ENCODE measurements at regions of chr1 and their contacts with region 1.

Region 1: DNA sequence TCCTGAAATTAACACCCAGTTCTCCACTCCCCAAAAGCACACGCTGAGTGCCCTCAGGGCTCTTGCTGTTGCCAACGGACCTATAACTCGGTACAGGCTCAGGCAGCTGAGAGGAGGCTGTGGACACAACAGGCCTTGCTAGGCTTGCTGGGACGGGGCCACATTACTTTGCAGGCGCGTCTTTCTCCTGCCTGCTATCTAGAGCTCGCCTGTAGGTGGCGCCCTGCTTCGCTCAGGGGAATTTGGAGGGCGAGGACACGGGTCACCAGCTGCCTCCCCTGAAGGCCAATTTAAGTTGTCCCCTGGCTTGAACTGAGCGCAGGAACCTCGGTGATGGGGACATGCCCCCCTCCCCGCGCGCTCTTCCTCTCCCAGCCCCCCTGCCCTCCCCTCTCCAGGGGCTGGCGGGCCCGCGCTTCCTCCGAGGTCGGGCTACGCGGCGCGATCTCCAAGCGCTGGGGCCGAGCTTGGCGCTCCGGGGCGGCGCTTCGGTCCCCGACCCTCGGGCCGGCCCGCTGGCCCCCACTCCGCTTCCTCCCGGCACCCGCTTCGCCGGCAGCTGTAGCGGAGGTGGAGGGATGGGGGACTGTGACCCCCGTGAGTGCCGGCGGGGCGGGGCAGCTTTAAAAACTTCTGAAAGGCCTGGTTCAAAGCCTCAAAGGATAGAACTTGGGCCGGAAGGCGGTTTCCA is 32.4 kb upstream of the NFIA start:
- DNase-seq: peak; percentile 70
- ATAC-seq: peak; percentile 80
- H3K4me3 ChIP-seq: peak overlapping the region; percentile 67 to 80 (median 74)
- H3K27ac ChIP-seq: peak overlapping the region; percentile 47
- H3K4me1 ChIP-seq: peaks cover 27% of the 10 kb centered on the region
- H3K27me3 ChIP-seq: peaks cover 2 to 32% of the 10 kb centered on the region in 2 experiments; a peak in 4 of 5 replicates
- CTCF ChIP-seq: peak; percentile 97
- EP300 ChIP-seq: no peak
- POLR2A ChIP-seq: no peak
- RAD21 ChIP-seq: peak; percentile 84

Region 2: DNA sequence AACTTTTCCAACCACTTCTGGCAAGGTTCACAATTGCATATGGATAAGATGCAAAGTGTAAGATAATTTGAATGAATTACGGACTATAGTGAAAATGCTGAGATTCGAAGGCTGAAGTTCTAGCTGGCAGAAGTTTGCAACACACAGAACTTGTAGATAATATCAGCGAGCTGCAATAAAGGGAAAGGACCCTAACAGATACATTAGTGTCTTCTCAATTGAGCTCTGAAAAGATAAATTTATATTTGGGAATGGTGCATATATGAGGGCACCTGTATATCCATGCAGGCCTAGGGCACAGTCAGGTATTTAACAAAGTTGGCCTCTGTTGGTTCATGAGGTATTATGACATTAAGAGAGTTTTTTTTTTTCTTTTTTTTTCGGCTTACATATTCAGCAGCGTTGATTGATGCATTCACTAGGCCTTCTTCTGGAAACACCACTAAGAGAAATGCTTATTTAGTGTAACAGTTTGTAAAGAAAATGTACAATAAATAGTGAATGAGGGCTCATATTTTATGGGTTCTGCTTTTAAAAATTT is 34.6 kb after region 1 on chr1:
- CTCF ChIA-PET with region 1: no interaction called
- POLR2A ChIA-PET with region 1: interaction called, 11 read pairs
- in situ Hi-C with region 1: no loop called
- intact Hi-C with region 1: loop called (anchors 5 kb)
- DNase-seq: no peak
- ATAC-seq: no peak
- H3K4me3 ChIP-seq: peak overlapping the region; percentile 83 to 96 (median 86); a peak in 5 of 6 replicates
- H3K27ac ChIP-seq: peak overlapping the region; percentile 95
- H3K4me1 ChIP-seq: peaks cover 64% of the 10 kb centered on the region
- H3K27me3 ChIP-seq: no peaks in the 10 kb centered on the region; a peak in 1 of 5 replicates
- CTCF ChIP-seq: no peak
- EP300 ChIP-seq: no peak
- POLR2A ChIP-seq: no peak
- RAD21 ChIP-seq: no peak

Region 3: DNA sequence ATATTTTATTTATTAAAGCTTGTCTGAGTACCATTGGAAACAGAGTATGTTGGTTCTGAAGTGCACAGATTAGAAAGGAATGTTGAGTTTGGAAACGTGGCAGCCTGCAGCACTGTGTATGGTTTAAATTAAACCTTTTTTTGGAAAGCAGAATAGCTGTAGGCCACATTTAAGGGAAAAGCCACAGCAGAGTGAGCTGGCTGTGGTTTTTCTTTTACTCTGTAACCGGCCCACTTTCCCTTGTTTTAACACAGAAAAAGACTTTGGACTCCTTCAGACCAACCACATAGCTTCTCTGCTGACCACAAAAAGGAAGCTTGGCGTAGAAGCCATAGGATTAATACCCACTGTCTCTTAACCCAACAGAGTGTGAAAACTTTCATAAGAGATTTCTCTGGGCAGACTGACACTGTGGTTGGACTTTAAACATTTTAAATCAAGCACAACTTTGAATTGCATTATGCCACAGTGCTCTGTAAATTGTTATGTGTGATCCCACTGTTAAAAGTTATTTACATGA is 107.5 kb after region 1 on chr1:
- CTCF ChIA-PET with region 1: no interaction called
- POLR2A ChIA-PET with region 1: no interaction called
- in situ Hi-C with region 1: no loop called
- intact Hi-C with region 1: loop called (anchors 10 kb)
- DNase-seq: peak; percentile 85
- ATAC-seq: peak; percentile 93
- H3K4me3 ChIP-seq: peak overlapping the region in 1 of 3 experiments; percentile 31; a peak in 2 of 6 replicates
- H3K27ac ChIP-seq: peak overlapping the region; percentile 65
- H3K4me1 ChIP-seq: peaks cover 58% of the 10 kb centered on the region
- H3K27me3 ChIP-seq: no peaks in the 10 kb centered on the region
- CTCF ChIP-seq: no peak
- EP300 ChIP-seq: 0 out of 4 replicates have a peak, but pooled peaks of 1 of the 2 experiments have one; percentile 39
- POLR2A ChIP-seq: no peak
- RAD21 ChIP-seq: no peak

Region 4: DNA sequence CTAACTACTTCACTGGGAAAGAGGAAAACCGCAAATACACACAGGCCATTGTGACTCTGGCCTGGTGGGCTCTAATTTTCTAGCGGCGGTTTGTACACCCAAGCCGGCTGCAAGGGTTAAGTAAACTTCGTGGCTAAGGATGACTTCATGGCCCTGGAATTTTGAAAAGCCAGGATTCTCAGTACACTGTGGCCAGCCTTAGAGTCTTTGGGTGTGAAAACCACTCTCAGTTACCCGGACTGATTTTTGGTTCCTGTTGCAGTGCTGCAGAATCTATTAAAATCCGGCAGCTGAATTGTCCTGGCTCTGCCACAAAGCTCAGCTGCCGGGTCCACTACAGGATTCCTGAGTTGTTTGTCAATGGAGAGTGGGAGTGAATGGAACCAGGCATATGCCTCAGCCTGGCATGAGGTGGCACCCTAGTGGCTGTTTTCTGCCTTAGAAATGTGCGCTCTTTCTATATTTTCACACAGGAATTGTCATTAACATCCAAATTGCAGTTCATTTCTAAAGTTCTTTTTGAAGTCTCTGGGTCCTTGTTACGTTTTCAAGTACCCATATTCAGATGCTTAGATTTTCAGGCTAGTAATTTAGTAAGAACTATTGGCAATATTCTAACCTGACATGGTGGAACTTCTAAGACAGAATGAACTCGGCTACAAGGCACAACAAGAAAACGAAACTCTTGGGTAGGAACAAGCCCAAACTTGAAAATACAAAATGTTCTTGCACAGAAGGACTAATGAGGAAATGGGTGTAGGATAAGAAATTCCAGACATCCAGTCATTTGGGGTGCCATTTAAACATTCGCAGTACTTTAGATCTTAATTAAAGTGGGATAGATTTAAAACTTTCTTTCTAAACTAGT is 288.2 kb after region 1 on chr1:
- CTCF ChIA-PET with region 1: interaction called, 5 read pairs
- POLR2A ChIA-PET with region 1: no interaction called
- in situ Hi-C with region 1: loop called (anchors 5 kb)
- intact Hi-C with region 1: loop called (anchors 2 kb)
- DNase-seq: peak; percentile 91
- ATAC-seq: peak; percentile 95
- H3K4me3 ChIP-seq: peak overlapping the region; percentile 7 to 39 (median 37); a peak in 2 of 6 replicates
- H3K27ac ChIP-seq: peak overlapping the region; percentile 78
- H3K4me1 ChIP-seq: peaks cover 47% of the 10 kb centered on the region
- H3K27me3 ChIP-seq: no peaks in the 10 kb centered on the region
- CTCF ChIP-seq: peak; percentile 69
- EP300 ChIP-seq: peak; percentile 36 to 65; a peak in 2 of 4 replicates
- POLR2A ChIP-seq: no peak
- RAD21 ChIP-seq: peak; percentile 67; the same call in 1 of the 2 replicates

Region 5: DNA sequence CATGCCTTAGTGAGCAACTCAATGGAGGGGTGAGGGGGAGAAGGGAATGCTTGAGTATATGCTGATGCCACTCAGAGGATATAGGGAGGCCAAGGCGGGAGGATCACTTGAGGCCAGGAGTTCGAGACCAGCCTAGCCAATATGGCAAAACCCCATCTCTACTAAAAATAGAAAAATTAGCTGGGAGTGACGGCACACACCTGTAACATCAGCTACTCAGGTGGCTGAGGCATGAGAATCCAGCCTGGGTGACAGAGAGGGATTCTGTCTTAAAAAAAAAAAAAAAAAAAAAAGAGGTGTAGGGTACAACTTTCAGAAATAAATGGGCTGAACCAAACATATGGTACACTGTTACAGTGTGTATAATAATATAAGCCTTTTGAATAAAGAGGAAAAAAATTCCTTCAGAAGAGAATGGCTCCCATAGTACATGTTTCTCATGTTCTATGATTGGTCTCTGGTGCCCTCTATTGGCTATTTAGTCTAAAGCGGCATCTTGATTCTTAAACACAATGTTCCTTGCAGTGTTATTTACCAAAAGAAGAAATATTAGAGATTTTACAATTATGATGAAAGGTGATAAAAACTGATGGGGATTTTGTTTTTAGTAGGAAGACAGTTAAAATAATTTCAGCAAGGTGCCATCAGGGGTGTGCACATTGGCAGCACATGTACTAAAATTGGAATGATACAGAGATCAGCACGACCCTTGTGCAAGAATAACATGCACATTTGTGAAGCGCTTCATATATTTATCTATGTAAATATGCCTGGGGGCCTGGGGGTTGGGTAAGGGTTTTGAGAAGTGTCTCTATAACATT is 802.1 kb after region 1 on chr1:
- CTCF ChIA-PET with region 1: no interaction called
- POLR2A ChIA-PET with region 1: no interaction called
- in situ Hi-C with region 1: no loop called
- intact Hi-C with region 1: loop called (anchors 10 kb)
- DNase-seq: peak; percentile 47
- ATAC-seq: peak; percentile 65
- H3K4me3 ChIP-seq: no peak overlapping the region
- H3K27ac ChIP-seq: no peak overlapping the region
- H3K4me1 ChIP-seq: no peaks in the 10 kb centered on the region
- H3K27me3 ChIP-seq: no peaks in the 10 kb centered on the region
- CTCF ChIP-seq: peak; percentile 66
- EP300 ChIP-seq: no peak
- POLR2A ChIP-seq: no peak
- RAD21 ChIP-seq: peak; percentile 16; the same call in 1 of the 2 replicates